ENCODE measurements at regions of chr13 and their contacts with region 1.

Region 1: DNA sequence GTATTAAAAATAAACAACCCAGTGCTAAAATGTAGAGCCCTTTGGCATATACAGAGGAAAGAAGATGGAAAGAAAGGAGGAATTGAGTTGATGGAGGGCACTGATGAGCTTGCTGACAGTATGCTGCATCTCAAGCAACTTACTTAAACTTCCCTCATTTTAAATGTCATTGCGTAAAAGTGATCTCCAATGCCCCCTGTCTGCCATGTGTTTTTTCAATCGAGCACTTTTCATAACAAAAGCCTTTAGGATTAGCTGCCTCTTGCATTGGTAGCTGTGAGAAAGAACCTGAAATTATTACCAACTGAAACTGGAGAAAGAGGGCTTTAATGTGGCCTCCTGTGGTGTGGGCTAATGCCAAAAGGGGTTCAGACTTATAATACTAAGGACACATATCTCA is 541.6 kb downstream of the SUCLA2 start:
- DNase-seq: no peak
- H3K4me3 ChIP-seq: no peak overlapping the region
- H3K27ac ChIP-seq: no peak overlapping the region
- H3K27me3 ChIP-seq: no peaks in the 10 kb centered on the region
- CTCF ChIP-seq: peak; percentile 51

Region 2: DNA sequence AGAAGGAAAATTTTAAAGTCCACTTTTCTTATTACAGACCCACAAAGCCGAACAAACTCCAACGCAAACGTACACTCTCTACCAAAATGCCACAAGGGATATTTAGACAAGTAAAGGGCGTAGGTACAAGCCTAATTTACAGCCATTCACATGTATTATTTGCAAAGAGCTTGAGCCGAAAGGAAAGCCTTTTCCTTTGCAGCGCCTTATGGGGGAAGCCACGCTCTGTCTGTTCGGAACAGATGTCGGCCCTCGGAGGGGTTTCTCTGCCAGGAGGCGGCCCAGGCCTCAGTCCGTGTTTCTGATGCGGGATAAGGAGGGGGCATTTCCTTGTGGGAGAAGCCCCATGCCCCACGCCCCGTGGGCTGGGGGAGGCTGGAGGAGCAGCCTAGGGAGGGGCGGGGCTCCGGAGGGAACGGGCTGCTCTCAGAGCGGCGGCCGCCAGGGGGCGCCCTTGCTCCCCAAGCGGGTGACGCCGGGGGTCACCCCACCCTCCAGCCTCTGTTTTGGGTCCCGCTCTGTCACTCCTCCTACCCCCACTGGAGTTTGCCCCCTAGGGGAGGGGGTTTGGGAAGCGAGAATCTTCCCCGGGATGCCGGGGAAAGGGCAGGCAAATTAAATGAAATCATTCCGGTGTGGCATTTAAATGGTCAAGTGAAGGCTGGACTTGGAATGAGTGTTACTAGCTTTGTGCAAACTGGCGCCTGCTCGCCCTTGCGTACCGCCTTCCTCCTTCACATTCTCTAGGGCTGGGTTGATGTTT is 565.5 kb before region 1 on chr13:
- CTCF ChIA-PET with region 1: interaction called, 11 read pairs
- POLR2A ChIA-PET with region 1: no interaction called
- DNase-seq: no peak
- H3K4me3 ChIP-seq: peak overlapping the region; percentile 73
- H3K27ac ChIP-seq: no peak overlapping the region
- H3K27me3 ChIP-seq: peaks cover 12% of the 10 kb centered on the region
- CTCF ChIP-seq: peak; percentile 91

Region 3: GRCh38 chr13:47426126-47426849 is 33.2 kb before region 1 on chr13:
- CTCF ChIA-PET with region 1: no interaction called
- POLR2A ChIA-PET with region 1: no interaction called
- DNase-seq: no peak
- H3K4me3 ChIP-seq: no peak overlapping the region
- H3K27ac ChIP-seq: no peak overlapping the region
- H3K27me3 ChIP-seq: no peaks in the 10 kb centered on the region
- CTCF ChIP-seq: no peak

Region 4: GRCh38 chr13:47708386-47708785 is 248.9 kb after region 1 on chr13:
- CTCF ChIA-PET with region 1: no interaction called
- POLR2A ChIA-PET with region 1: no interaction called
- DNase-seq: no peak
- H3K4me3 ChIP-seq: no peak overlapping the region
- H3K27ac ChIP-seq: no peak overlapping the region
- H3K27me3 ChIP-seq: no peaks in the 10 kb centered on the region
- CTCF ChIP-seq: no peak

Region 5: DNA sequence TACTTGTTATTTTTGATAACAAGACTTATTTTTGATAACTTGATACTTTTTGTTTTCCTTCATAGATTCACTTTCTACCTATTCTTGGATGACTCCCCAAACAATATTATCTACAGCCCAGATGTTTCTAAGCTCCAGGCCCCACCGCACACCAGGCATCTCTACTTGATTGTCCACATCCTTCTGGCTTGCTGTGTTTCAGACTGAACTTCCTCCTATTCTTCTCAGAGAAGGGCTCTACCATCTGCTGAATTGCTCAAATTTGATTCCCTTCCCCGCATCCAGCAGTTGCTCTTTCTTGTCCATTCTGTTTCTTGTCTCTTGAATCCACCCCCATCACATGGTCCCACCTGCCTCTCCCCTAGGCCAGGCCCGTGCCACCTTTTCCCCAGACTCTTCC is 591.0 kb after region 1 on chr13:
- CTCF ChIA-PET with region 1: no interaction called
- POLR2A ChIA-PET with region 1: no interaction called
- DNase-seq: no peak
- H3K4me3 ChIP-seq: no peak overlapping the region
- H3K27ac ChIP-seq: no peak overlapping the region
- H3K27me3 ChIP-seq: no peaks in the 10 kb centered on the region
- CTCF ChIP-seq: no peak

Measured in AG04450 (cell line).